Activated B cell treated with CpG ODN at 0.5 μM for 24 hours (primary cell): ENCODE measurements at regions of chr10 and their contacts with region 1.

Region 1: DNA sequence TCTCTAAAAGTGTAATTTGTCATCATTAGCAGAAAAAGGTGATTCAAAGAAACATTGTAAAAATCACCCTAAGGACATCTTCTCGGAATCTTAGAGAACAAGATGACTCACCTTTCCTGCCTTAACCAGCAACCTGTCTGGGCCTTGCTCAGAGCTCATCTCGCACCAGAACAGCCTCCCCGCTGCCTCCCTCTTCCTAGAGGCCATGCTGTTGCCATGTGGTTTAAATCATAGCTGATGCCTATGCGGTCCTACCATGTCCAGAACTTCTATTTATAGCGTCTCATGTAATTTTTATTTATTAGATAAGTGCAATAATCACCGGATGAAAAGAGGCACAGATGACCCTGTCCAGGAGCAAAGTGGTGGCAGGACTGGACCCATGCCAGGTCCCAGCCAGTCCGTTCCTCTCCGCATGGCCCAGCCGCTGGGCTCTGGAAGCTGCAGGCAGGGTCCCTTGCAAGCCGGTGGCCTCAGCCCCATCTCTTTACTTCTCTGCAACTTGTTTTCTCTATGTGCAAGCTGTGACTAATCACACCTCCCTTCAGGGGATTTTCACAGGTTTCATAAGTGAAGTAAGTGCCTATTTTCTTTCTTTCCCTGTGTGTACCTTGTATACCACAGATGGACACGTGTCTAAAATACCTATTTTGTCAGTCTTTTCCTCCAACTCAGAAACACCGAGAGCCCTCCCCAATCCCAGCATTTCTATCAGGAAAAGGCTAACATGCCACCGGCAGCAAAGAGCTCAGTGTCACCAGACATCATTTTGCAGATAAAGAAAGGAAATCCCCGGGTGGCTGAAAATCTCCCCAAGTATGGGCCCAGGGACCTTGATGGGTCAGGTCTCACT is 27.1 kb downstream of the KLF6 start:
- DNase-seq: no peak
- ATAC-seq: peak; percentile 60
- H3K4me3 Mint-ChIP-seq: peak overlapping the region; percentile 78
- H3K27ac Mint-ChIP-seq: peak overlapping the region; percentile 99
- H3K4me1 Mint-ChIP-seq: peaks cover 76% of the 10 kb centered on the region
- H3K27me3 Mint-ChIP-seq: no peaks in the 10 kb centered on the region
- CTCF ChIP-seq: no peak

Region 2: GRCh38 chr10:3482200-3483138 is 275.4 kb before region 1 on chr10:
- CTCF ChIA-PET with region 1: interaction called, 3 read pairs
- POLR2A ChIA-PET with region 1: interaction called, 17 read pairs
- intact Hi-C with region 1: loop called (anchors 1 kb)
- DNase-seq: no peak
- ATAC-seq: no peak
- H3K4me3 Mint-ChIP-seq: peak overlapping the region; percentile 36
- H3K27ac Mint-ChIP-seq: peak overlapping the region; percentile 9
- H3K4me1 Mint-ChIP-seq: peaks cover 68% of the 10 kb centered on the region
- H3K27me3 Mint-ChIP-seq: no peaks in the 10 kb centered on the region
- CTCF ChIP-seq: no peak

Region 3: DNA sequence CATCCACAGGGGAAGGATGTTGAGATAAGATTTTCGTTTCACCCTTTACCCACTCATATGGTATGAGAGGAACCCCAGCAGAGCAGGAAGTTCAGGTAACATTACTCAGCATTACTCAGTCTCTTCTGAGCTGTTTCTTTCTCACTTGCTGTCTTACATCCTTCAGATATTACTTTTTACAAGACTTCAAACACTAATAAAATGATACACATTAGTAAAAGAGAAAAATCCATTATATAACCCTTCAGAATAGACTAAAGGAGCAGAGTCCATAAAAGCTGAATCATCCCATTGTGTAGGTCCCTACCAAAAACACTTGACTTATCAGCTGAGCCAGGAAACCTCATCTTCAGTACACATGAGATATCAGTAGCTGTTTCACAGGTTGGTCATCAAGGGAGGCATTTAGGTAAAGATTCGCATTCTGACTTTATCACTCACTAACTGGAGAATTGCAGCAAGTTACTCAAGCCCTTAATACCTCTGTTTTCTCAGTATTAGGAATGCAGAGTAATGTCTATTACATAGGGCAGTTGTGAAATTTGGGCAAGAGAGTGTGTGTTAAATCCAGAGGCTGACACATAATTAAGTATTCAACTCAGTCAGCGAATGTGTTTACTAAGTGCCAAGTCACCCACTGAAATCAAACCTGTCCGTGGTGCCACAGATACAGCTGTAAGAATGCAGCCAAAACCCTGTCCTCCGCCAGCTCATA is 17.6 kb before region 1 on chr10:
- CTCF ChIA-PET with region 1: no interaction called
- POLR2A ChIA-PET with region 1: interaction called, 5 read pairs
- intact Hi-C with region 1: loop called (anchors 2 kb)
- DNase-seq: no peak
- ATAC-seq: peak; percentile 42
- H3K4me3 Mint-ChIP-seq: no peak overlapping the region
- H3K27ac Mint-ChIP-seq: no peak overlapping the region
- H3K4me1 Mint-ChIP-seq: peaks cover 14% of the 10 kb centered on the region
- H3K27me3 Mint-ChIP-seq: no peaks in the 10 kb centered on the region
- CTCF ChIP-seq: no peak

Region 4: GRCh38 chr10:3805791-3806461 is 48.1 kb after region 1 on chr10:
- CTCF ChIA-PET with region 1: no interaction called
- POLR2A ChIA-PET with region 1: interaction called, 7 read pairs
- intact Hi-C with region 1: loop called (anchors 1 kb)
- DNase-seq: peak; percentile 47
- ATAC-seq: peak; percentile 69
- H3K4me3 Mint-ChIP-seq: peak overlapping the region; percentile 73
- H3K27ac Mint-ChIP-seq: peak overlapping the region; percentile 92
- H3K4me1 Mint-ChIP-seq: peaks cover 69% of the 10 kb centered on the region
- H3K27me3 Mint-ChIP-seq: no peaks in the 10 kb centered on the region
- CTCF ChIP-seq: no peak

Region 5: DNA sequence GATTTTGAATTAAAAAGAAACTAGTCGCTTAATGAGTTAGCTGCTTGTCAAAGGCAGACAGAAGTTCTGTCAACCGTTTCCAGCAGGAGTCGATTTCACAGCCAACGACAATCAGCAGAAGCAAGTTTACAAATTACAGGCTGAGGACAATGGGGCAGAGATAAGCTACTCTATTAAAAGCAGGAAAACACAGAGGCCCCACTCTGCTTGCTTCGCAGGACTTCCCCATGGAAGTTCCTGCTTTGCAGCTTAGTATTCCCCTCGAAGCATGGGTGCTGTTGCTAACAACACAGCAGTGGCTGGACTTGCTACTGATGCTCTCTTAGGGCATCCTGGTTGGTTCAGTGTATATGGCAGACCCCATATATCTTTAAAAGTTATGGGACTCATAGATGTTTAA is 77.9 kb after region 1 on chr10:
- CTCF ChIA-PET with region 1: no interaction called
- POLR2A ChIA-PET with region 1: no interaction called
- intact Hi-C with region 1: no loop called
- DNase-seq: no peak
- ATAC-seq: peak; percentile 50
- H3K4me3 Mint-ChIP-seq: no peak overlapping the region
- H3K27ac Mint-ChIP-seq: peak overlapping the region; percentile 12
- H3K4me1 Mint-ChIP-seq: peaks cover 23% of the 10 kb centered on the region
- H3K27me3 Mint-ChIP-seq: no peaks in the 10 kb centered on the region
- CTCF ChIP-seq: no peak

Region 6: GRCh38 chr10:3902054-3902808 is 144.4 kb after region 1 on chr10:
- CTCF ChIA-PET with region 1: no interaction called
- POLR2A ChIA-PET with region 1: interaction called, 5 read pairs
- intact Hi-C with region 1: loop called (anchors 1 kb)
- DNase-seq: peak; percentile 30
- ATAC-seq: peak; percentile 87
- H3K4me3 Mint-ChIP-seq: peak overlapping the region; percentile 58
- H3K27ac Mint-ChIP-seq: peak overlapping the region; percentile 87
- H3K4me1 Mint-ChIP-seq: peaks cover 54% of the 10 kb centered on the region
- H3K27me3 Mint-ChIP-seq: no peaks in the 10 kb centered on the region
- CTCF ChIP-seq: no peak

Region 7: DNA sequence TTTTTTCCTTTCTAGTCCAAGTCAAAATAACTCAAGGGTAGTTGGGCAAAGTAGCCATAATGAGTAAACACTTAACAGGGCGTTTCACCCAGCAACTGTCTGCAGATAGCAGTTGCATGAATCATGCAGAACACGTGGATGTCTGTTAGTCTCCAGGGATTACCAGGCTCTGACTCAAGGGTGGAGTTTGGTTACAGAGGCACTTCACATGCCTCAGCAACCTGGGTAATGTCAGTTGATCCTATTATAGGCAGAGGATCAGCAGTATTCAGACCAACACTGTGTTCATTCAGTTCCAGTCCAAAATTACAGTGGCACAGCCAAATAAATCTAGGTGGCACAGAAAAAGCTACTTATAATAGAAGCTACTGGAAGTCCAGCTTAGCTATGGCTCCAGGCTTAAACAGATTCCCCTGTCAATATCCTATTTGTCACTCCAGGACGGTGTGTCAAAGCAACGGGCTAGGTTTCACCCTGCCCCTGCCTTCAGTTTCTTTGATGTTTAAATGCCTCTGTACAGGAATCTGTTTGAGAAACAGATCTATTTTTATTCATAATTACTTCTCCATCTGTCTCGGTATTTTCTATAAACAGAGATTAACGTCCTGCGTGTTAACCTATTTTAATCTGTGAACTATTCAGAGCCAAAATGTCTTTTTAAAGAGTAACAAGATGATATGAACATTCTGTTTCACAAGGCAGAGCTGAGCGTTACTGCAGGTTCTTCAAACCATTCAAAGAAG is 905.5 kb after region 1 on chr10:
- CTCF ChIA-PET with region 1: no interaction called
- POLR2A ChIA-PET with region 1: interaction called, 5 read pairs
- intact Hi-C with region 1: loop called (anchors 2 kb)
- DNase-seq: peak; percentile 27
- ATAC-seq: peak; percentile 100
- H3K4me3 Mint-ChIP-seq: peak overlapping the region; percentile 50
- H3K27ac Mint-ChIP-seq: peak overlapping the region; percentile 36
- H3K4me1 Mint-ChIP-seq: peaks cover 20% of the 10 kb centered on the region
- H3K27me3 Mint-ChIP-seq: peaks cover 2% of the 10 kb centered on the region
- CTCF ChIP-seq: no peak